OCI-LY7 (cell line): ENCODE measurements at regions of chr9 and their contacts with region 1.

Region 1: DNA sequence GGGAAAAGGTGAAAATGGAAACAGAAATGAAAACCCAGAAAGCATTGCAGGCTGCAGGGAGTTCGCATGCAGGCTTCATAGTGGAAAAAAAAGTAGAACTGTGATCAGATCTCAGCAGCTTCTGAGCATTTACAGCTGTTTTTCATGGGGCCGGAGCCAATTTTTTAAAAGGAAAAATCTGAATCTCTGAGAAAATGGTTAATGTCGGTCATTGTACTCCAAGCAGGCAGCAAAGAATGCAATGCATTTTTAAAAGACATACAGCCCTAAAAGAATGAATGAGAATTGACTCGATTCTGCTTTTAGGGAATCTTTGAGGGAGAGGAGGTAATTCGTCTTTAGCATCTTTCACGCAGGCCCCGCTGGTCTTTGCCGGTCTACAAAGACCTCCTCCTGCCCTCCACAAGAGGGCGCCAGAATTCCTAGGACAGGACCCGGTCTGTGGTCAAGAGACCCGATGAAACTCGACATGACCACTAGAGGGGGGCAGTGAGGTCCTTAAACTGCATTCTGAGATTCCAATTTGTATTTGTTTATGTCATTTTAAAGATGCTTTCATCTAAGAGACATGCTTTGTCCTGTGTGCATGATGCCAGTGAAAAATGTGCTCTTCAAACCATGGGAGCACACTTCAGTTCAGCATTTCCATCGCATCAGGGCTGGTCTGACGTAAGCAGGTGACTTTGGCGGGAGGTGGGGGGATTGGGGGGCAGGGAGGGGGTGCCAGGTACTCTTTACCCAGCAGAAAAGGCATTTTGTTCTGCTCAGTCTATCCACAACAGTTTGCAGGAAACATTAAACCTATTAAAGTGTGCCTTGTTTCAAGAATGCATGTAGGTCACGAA is 43.7 kb upstream of the TMEM252 start:
- DNase-seq: peak; percentile 94
- H3K4me3 ChIP-seq: no peak overlapping the region
- H3K27ac ChIP-seq: no peak overlapping the region
- H3K4me1 ChIP-seq: peaks cover 53% of the 10 kb centered on the region
- CTCF ChIP-seq: peak; percentile 100

Region 2: DNA sequence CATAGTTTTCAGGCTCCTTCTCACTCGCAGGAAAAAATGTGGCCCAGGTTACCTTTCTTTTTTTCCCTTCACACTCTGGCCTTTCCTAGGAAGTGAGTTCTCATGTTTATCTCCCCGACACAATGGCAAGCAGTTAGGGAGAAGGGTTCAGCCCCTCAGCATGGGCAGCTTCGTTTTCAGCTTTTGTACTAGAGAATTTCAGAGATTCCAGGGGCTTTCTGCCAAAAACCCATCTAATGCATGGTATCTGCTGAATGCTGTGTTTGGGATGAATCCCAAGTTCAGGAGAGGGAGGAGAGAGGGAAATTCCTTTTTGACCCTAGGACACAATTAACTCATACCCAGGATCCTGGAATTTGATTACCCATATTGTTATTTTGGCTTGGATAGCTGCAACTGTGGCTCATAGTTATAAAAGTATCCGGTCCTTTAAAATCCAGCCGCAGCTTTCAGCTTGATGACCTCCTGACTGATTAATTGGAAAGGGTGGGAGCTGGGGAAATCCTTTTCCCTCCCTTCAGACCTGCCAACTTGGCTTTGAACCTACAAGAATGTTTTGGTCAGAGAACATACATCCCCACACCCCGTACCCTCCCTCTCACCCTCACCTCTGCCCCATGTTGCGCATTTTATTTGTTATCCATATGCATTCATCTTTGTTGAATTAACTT is 122.2 kb before region 1 on chr9:
- CTCF ChIA-PET with region 1: no interaction called
- POLR2A ChIA-PET with region 1: no interaction called
- intact Hi-C with region 1: no loop called
- DNase-seq: no peak
- H3K4me3 ChIP-seq: no peak overlapping the region
- H3K27ac ChIP-seq: no peak overlapping the region
- H3K4me1 ChIP-seq: no peaks in the 10 kb centered on the region
- CTCF ChIP-seq: no peak

Region 3: DNA sequence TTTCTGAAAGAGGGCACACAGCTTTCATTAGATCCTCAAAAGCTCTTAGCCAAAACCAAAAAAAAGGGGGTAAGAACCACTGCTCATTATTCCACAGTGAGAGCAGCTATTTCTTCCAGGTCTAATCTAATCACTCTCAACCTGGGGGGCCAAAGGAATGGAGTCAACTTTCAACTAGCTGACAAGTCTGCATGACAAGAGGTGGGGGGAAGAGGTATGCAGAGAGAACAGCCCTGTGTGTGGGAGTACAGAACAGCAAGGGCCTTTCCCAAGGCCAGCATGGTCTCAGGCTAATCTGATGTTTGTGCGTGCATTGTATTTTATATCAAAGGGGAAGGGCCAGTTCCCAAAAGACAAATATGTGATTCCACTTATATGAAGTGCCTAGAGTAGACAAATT is 83.7 kb after region 1 on chr9:
- CTCF ChIA-PET with region 1: interaction called, 11 read pairs
- POLR2A ChIA-PET with region 1: no interaction called
- intact Hi-C with region 1: no loop called
- DNase-seq: no peak
- H3K4me3 ChIP-seq: no peak overlapping the region
- H3K27ac ChIP-seq: no peak overlapping the region
- H3K4me1 ChIP-seq: peaks cover 11% of the 10 kb centered on the region
- CTCF ChIP-seq: no peak

Region 4: GRCh38 chr9:68704814-68705530 is 120.6 kb after region 1 on chr9 and contains the start of gene PIP5K1B:
- CTCF ChIA-PET with region 1: interaction called, 3 read pairs
- POLR2A ChIA-PET with region 1: interaction called, 5 read pairs
- intact Hi-C with region 1: loop called (anchors 1 kb)
- DNase-seq: peak; percentile 92
- H3K4me3 ChIP-seq: peak within 1 kb of the TSS; percentile 82
- H3K27ac ChIP-seq: peak within 1 kb of the TSS; percentile 59
- H3K4me1 ChIP-seq: peaks cover 43% of the 10 kb centered on the region
- CTCF ChIP-seq: peak; percentile 23; the same call in 1 of the 2 replicates
- total RNA-seq, gene PIP5K1B: 3.8 and 4.8 TPM in 2 replicates

Region 5: GRCh38 chr9:68844631-68845612 is 260.5 kb after region 1 on chr9:
- CTCF ChIA-PET with region 1: no interaction called
- POLR2A ChIA-PET with region 1: no interaction called
- intact Hi-C with region 1: loop called (anchors 1 kb)
- DNase-seq: peak; percentile 67
- H3K4me3 ChIP-seq: no peak overlapping the region
- H3K27ac ChIP-seq: no peak overlapping the region
- H3K4me1 ChIP-seq: no peaks in the 10 kb centered on the region
- CTCF ChIP-seq: peak; percentile 87

Region 6: DNA sequence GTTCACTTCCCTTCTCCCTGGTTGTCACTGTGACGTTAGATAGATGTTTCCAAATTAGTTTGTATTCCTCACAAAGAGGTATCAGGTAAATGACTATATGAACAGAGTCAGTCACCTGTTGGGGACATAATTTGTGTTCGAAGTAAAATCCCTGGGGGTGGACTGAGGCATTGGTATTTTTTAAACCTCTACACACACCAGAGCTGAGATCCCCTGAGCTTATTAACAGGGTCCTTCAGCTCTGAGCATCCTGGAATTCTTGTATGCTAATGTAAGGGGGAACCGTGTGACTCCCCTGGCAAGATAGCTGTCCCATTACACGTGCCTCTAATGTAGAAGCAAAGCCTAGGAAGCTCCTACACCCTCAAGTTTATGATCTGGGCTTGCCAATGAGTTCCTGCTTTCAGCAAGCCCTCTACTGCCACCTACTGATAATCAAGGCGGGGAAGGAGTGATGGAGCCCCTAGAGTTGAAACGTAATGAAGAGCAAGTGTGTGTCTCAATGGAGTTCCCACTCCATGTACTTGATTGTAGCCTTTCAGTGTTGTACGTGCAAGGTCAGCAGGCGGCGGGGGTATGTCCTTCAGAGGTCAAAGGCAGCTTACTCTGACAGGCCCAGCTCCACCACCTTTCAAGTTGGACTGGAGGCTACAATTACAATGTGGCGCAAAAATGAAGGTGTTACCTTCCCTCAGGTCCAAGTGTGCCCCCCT is 415.1 kb after region 1 on chr9:
- CTCF ChIA-PET with region 1: interaction called, 6 read pairs
- POLR2A ChIA-PET with region 1: no interaction called
- intact Hi-C with region 1: loop called (anchors 1 kb)
- DNase-seq: peak; percentile 87
- H3K4me3 ChIP-seq: no peak overlapping the region
- H3K27ac ChIP-seq: no peak overlapping the region
- H3K4me1 ChIP-seq: peaks cover 13% of the 10 kb centered on the region
- CTCF ChIP-seq: peak; percentile 95